ENCODE measurements at regions of chr3 and their contacts with region 1.

Region 1: DNA sequence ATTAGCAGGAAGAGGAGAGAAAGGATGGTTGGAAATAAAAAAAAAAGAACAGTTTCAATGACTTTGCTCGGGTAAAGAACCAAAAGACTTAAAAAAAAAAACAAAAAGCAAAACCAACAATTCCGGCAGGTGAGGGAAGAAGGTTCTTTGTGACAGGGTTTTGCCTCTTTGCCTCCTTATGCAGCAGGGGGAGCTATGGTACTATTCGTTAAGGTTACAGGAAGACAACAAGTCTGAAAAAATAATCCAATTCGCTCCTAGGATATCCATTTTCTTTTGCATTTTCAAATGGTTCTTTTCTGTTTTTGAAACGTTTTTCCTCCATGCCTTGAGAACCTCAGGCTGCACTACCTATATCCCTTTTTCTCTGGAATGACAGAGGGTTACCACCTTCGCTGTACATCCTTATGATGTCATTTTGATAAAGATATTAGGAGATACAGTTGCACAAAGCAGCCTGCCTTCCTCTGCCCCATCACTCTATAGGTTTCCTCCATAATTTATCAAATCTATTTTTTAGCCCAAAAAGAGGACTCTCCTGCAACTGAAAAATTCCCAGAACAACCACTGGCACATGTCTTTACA is 55.0 kb downstream of the CFAP20DC start:
- DNase-seq: peak; percentile 60
- ATAC-seq: peak; percentile 59; the same call in 1 of the 2 replicates
- H3K4me3 ChIP-seq: no peak overlapping the region
- H3K27ac ChIP-seq: no peak overlapping the region
- H3K4me1 ChIP-seq: peaks cover 0 to 32% of the 10 kb centered on the region in 2 experiments; a peak in 2 of 4 replicates
- H3K27me3 ChIP-seq: no peaks in the 10 kb centered on the region
- CTCF ChIP-seq: peak; percentile 61 to 85 (median 81); a peak in 5 of 6 replicates
- POLR2A ChIP-seq: no peak
- RAD21 ChIP-seq: peak; percentile 86

Region 2: DNA sequence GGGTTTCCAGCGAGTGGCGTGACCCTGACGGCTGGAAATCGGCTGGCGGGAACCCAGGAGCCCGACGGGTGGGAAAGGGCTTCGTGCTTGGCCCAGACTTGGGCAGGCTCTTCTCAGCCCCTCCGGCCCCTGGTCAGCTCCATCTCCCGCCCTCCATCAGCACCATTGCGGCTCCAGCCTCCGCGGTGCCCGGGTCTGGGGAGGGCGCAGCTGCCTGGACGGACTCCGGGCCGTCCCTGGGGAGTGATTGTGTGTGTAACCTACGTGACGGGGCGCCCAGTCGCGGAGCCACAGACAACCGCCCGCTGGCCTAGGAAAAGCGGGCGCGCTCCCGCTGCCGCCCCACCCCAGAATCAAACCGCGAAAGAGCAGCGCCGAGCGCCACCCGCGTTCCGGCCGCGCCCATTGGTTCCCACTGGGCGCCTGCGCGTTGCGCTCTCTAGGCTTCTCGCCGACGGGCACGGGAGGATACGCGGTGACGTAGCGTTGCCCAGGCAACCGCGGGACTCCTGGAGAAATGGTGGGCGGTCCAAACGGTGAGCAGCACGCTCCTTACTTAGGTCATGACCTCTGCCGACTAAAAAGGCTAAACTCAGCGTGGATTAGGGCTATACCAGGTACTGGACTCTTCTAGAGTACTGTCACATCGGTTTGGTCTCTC is 55.0 kb after region 1 on chr3 and contains the start of gene CFAP20DC:
- CTCF ChIA-PET with region 1: interaction called, 13 read pairs
- POLR2A ChIA-PET with region 1: no interaction called
- RAD21 ChIA-PET with region 1: no interaction called
- intact Hi-C with region 1: loop called (anchors 1 kb)
- DNase-seq: peak; percentile 85
- ATAC-seq: peak; percentile 98
- H3K4me3 ChIP-seq: peak within 1 kb of the TSS; percentile 63 to 68
- H3K27ac ChIP-seq: peak within 1 kb of the TSS; percentile 42; the same call in 1 of the 2 replicates
- H3K4me1 ChIP-seq: peaks cover 8 to 28% of the 10 kb centered on the region in 2 experiments; a peak in 3 of 4 replicates
- H3K27me3 ChIP-seq: no peaks in the 10 kb centered on the region
- CTCF ChIP-seq: no peak
- POLR2A ChIP-seq: peak; percentile 95
- RAD21 ChIP-seq: no peak
- total RNA-seq, gene CFAP20DC: 2.9 TPM

Region 3: GRCh38 chr3:59093521-59093920 is 98.7 kb after region 1 on chr3:
- CTCF ChIA-PET with region 1: no interaction called
- POLR2A ChIA-PET with region 1: no interaction called
- RAD21 ChIA-PET with region 1: no interaction called
- intact Hi-C with region 1: no loop called
- DNase-seq: no peak
- ATAC-seq: no peak
- H3K4me3 ChIP-seq: no peak overlapping the region
- H3K27ac ChIP-seq: no peak overlapping the region
- H3K4me1 ChIP-seq: no peaks in the 10 kb centered on the region
- H3K27me3 ChIP-seq: peaks cover 8% of the 10 kb centered on the region; the same call in 1 of the 2 replicates
- CTCF ChIP-seq: no peak
- POLR2A ChIP-seq: no peak
- RAD21 ChIP-seq: no peak

Region 4: GRCh38 chr3:59212128-59212779 is 217.4 kb after region 1 on chr3:
- CTCF ChIA-PET with region 1: no interaction called
- POLR2A ChIA-PET with region 1: no interaction called
- RAD21 ChIA-PET with region 1: no interaction called
- intact Hi-C with region 1: loop called (anchors 10 kb)
- DNase-seq: peak; percentile 22
- ATAC-seq: peak; percentile 85
- H3K4me3 ChIP-seq: no peak overlapping the region
- H3K27ac ChIP-seq: no peak overlapping the region
- H3K4me1 ChIP-seq: no peaks in the 10 kb centered on the region
- H3K27me3 ChIP-seq: peaks cover 24% of the 10 kb centered on the region; the same call in 1 of the 2 replicates
- CTCF ChIP-seq: peak; percentile 38 to 71 (median 55); a peak in 5 of 6 replicates
- POLR2A ChIP-seq: no peak
- RAD21 ChIP-seq: peak; percentile 70

Region 5: DNA sequence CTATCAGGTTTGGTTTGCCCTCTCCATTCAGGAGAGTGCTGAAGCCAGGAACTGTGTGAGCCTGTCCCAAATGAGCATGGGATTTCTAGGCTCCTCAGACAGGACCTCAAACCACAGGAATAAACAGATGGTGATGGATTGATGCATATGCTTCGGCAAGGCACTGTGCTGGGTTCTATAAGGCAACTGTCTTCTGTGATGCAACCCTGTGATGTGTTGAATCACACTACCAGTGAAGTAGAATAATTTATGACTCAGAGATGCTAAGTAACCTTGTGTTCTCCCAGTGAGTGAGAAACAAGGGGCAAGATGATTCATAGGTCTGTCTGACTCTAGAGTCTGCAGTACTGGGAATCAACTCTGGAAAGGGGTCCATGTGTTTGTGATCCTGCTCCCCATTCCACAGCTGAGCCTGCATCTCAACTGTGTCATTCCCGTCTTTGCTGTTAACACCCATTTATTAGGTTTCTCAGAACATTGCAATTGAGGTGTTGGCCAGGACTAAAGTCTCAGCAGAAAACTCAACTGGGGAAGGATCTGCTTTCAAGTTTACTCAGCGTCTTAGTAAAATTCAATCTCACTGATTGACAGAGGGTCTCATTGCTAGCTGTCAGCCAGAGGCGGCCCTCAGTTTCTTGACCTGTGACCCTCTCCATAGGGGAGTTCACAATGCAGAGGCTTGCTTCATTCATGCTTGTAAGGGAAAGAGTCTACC is 565.0 kb after region 1 on chr3:
- CTCF ChIA-PET with region 1: no interaction called
- POLR2A ChIA-PET with region 1: no interaction called
- RAD21 ChIA-PET with region 1: no interaction called
- intact Hi-C with region 1: loop called (anchors 10 kb)
- DNase-seq: peak; percentile 23
- ATAC-seq: peak; percentile 60
- H3K4me3 ChIP-seq: no peak overlapping the region
- H3K27ac ChIP-seq: no peak overlapping the region
- H3K4me1 ChIP-seq: peaks cover 0 to 4% of the 10 kb centered on the region in 2 experiments; a peak in 1 of 4 replicates
- H3K27me3 ChIP-seq: peaks cover 3% of the 10 kb centered on the region; the same call in 1 of the 2 replicates
- CTCF ChIP-seq: no peak
- POLR2A ChIP-seq: no peak
- RAD21 ChIP-seq: no peak

Region 6: DNA sequence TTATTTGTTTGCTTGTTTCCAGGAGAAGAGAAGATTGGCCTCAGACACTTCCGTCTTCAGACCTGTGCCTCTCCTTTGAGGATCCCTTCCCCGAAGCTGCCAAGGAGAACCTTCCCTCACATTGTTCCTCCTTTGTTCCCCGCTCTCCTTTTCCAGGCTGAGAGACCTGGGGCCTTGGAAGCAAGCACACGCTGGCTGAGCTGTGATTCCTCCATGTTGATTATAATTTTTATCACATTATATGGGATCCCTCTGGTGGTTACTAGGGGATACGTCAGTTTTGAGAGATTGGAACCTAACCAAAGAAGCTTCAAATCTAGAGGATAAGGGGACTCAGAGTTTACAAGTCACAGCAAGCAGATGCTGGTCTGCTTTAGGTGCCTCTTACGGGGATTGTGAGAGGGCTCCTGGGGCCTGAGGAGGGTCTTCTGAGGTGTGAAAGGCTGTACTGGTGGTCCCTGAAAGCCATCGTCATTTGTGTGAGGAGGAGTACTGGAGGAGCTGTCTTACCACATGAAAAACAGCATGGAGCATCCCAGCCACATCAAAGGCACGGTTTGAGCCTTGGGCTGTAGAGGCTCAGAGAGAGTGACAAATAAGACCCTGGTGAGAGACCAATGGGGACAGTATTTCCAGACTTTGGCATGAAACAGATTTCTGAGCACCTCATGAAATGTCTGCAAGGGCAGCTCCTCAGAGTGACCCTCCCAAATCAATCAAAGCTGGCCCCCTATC is 815.0 kb after region 1 on chr3:
- CTCF ChIA-PET with region 1: no interaction called
- POLR2A ChIA-PET with region 1: no interaction called
- RAD21 ChIA-PET with region 1: no interaction called
- intact Hi-C with region 1: loop called (anchors 10 kb)
- DNase-seq: no peak
- ATAC-seq: peak; percentile 67
- H3K4me3 ChIP-seq: no peak overlapping the region
- H3K27ac ChIP-seq: no peak overlapping the region
- H3K4me1 ChIP-seq: peaks cover 0 to 12% of the 10 kb centered on the region in 2 experiments; a peak in 1 of 4 replicates
- H3K27me3 ChIP-seq: no peaks in the 10 kb centered on the region
- CTCF ChIP-seq: peak; percentile 22 to 48 (median 34); a peak in 4 of 6 replicates
- POLR2A ChIP-seq: no peak
- RAD21 ChIP-seq: peak; percentile 51

Region 7: DNA sequence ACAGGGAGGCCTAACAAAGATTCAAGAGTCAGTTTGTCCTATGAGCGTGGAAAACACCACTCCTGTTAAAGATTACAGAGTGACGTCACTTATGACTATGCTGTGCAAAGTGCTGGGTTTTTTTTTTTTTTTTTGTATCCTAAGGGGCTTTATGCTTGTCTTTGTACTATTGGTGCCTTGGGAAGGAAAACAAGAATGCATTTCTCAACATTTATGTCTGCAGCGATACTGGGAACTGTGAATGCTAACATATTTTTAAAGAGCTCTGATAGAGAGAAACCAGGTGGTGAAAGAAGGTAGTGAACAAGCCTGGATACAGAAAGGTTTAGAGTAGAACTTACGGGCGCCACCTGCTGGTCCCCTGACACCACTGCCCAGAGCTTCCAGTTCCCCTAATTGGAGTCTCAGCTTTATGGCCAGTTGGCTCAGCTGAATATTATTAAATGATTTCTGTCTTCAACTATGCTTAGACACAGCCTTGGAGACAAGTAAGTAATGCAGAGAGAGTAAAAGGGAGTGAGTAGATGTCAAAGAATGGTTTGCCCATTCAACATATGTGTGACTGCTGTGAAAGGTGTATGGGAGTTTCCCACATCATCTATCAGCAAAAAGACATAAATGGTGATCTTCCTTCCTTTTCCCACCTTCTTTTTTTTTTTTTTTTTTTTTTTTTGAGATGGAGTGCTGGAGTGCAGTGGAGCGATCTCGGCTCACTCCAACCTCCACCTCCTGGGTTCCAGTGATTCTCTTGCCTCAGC is 862.9 kb after region 1 on chr3:
- CTCF ChIA-PET with region 1: no interaction called
- POLR2A ChIA-PET with region 1: no interaction called
- RAD21 ChIA-PET with region 1: no interaction called
- intact Hi-C with region 1: loop called (anchors 5 kb)
- DNase-seq: peak; percentile 73
- ATAC-seq: peak; percentile 100
- H3K4me3 ChIP-seq: no peak overlapping the region
- H3K27ac ChIP-seq: no peak overlapping the region
- H3K4me1 ChIP-seq: peaks cover 0 to 7% of the 10 kb centered on the region in 2 experiments; a peak in 2 of 4 replicates
- H3K27me3 ChIP-seq: no peaks in the 10 kb centered on the region
- CTCF ChIP-seq: peak; percentile 78 to 95 (median 80)
- POLR2A ChIP-seq: no peak
- RAD21 ChIP-seq: peak; percentile 81

Region 8: DNA sequence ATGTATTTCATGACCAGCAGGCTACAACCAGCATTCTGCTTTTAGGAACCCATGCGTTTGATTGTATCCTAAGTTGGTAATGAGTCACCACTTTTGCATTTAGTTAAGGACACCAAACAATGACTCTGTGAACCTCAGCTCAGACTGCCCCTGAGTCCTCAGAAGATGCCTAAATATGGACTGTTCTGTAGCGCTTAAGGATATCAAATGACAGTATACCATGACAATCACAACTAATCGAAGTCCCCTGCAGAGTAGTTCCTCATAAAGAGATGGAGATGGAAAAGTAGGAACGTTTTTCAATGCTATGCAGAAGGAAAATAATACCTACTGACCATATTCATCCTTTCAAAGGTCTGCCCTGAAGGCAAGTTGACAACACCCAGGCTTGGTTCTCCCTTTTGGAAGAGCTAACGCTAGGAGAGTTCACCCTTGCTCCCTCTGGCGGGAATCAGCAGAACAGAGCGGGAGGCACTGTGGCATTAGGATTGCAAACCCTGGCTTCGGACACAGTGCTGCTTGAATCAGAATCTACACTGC is 1747.8 kb after region 1 on chr3:
- CTCF ChIA-PET with region 1: no interaction called
- POLR2A ChIA-PET with region 1: no interaction called
- RAD21 ChIA-PET with region 1: no interaction called
- intact Hi-C with region 1: loop called (anchors 10 kb)
- DNase-seq: no peak
- ATAC-seq: peak; percentile 72
- H3K4me3 ChIP-seq: no peak overlapping the region
- H3K27ac ChIP-seq: no peak overlapping the region
- H3K4me1 ChIP-seq: no peaks in the 10 kb centered on the region
- H3K27me3 ChIP-seq: no peaks in the 10 kb centered on the region
- CTCF ChIP-seq: peak; percentile 14 to 44 (median 37); a peak in 4 of 6 replicates
- POLR2A ChIP-seq: no peak
- RAD21 ChIP-seq: peak; percentile 34; the same call in 1 of the 2 replicates